Dendritic cell treated with granulocyte-macrophage colony-stimulating factor and Interleukin-4, amounts not matched to agents 40 ng/mL and 50 ng/mL, for 4 days (primary cell): ENCODE measurements at regions of chr2 and their contacts with region 1.

Region 1: GRCh38 chr2:97845818-97846217 is 132.4 kb downstream of the ZAP70 start:
- H3K4me3 Mint-ChIP-seq: no peak overlapping the region
- H3K27ac Mint-ChIP-seq: no peak overlapping the region
- H3K4me1 Mint-ChIP-seq: peaks cover 14% of the 10 kb centered on the region
- H3K27me3 Mint-ChIP-seq: no peaks in the 10 kb centered on the region

Region 2: GRCh38 chr2:97868986-97869721 is 23.3 kb after region 1 on chr2:
- intact Hi-C with region 1: loop called (anchors 1 kb)
- H3K4me3 Mint-ChIP-seq: no peak overlapping the region
- H3K27ac Mint-ChIP-seq: no peak overlapping the region
- H3K4me1 Mint-ChIP-seq: peaks cover 35% of the 10 kb centered on the region
- H3K27me3 Mint-ChIP-seq: no peaks in the 10 kb centered on the region

Region 3: GRCh38 chr2:97982621-97983020 is 136.8 kb after region 1 on chr2:
- intact Hi-C with region 1: no loop called
- H3K4me3 Mint-ChIP-seq: no peak overlapping the region
- H3K27ac Mint-ChIP-seq: no peak overlapping the region
- H3K4me1 Mint-ChIP-seq: peaks cover 38% of the 10 kb centered on the region
- H3K27me3 Mint-ChIP-seq: no peaks in the 10 kb centered on the region

Region 4: GRCh38 chr2:98134172-98135005 is 288.6 kb after region 1 on chr2:
- intact Hi-C with region 1: no loop called
- H3K4me3 Mint-ChIP-seq: no peak overlapping the region
- H3K27ac Mint-ChIP-seq: no peak overlapping the region
- H3K4me1 Mint-ChIP-seq: peaks cover 37% of the 10 kb centered on the region
- H3K27me3 Mint-ChIP-seq: peaks cover 83% of the 10 kb centered on the region